ENCODE measurements at regions of chr11 and their contacts with region 1.

Region 1: DNA sequence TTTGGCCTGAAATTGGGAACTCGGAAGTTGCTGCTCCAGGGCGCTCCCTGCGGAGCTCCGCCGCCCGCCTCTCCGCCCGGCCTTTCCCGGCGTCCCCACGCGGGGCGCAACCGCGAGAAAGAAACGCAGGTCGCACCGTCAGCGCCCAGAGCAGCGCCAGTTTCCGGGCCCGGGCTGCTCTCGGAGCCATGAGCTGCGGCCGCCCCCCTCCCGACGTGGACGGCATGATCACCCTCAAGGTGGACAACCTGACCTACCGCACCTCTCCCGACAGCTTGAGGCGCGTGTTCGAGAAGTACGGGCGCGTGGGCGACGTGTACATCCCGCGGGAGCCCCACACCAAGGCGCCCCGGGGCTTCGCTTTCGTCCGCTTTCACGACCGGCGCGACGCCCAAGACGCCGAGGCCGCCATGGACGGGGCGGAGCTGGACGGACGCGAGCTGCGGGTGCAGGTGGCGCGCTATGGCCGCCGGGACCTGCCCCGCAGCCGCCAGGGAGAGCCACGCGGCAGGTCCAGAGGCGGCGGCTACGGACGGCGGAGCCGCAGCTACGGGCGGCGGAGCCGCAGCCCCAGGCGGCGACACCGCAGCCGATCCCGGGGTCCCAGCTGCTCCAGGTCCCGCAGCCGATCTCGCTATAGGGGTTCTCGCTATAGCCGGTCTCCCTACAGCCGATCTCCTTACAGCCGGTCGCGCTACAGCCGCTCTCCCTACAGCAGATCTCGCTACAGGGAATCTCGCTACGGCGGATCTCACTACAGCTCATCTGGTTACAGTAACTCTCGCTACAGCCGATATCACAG is 521 bp downstream of the SRSF8 start:
- DNase-seq: peak; percentile 62 to 79 (median 74)
- ATAC-seq: peak; percentile 81
- H3K4me3 ChIP-seq: peak overlapping the region; percentile 87
- H3K4me3 Mint-ChIP-seq: peak overlapping the region; percentile 93 to 100 (median 96)
- H3K27ac ChIP-seq: peak overlapping the region; percentile 96
- H3K27ac Mint-ChIP-seq: peak overlapping the region; percentile 93 to 100 (median 97)
- H3K4me1 ChIP-seq: peaks cover 16 to 17% of the 10 kb centered on the region in 2 donors
- H3K4me1 Mint-ChIP-seq: peaks cover 17 to 38% (median 30%) of the 10 kb centered on the region in 7 donors
- H3K27me3 ChIP-seq: no peaks in the 10 kb centered on the region
- H3K27me3 Mint-ChIP-seq: peaks cover 0 to 23% (median 0%) of the 10 kb centered on the region in 5 donors

Region 2: GRCh38 chr11:93784152-93784934 is 1282.9 kb before region 1 on chr11 and contains the start of gene MED17:
- CTCF ChIA-PET with region 1: no interaction called
- POLR2A ChIA-PET with region 1: no interaction called
- intact Hi-C with region 1: loop called in 1 of 2 experiments (anchors 5 kb)
- DNase-seq: peak; percentile 64 to 87 (median 85)
- ATAC-seq: peak; percentile 97
- H3K4me3 ChIP-seq: peak within 1 kb of the TSS; percentile 77
- H3K4me3 Mint-ChIP-seq: peak within 1 kb of the TSS; percentile 93 to 100 (median 96)
- H3K27ac ChIP-seq: peak within 1 kb of the TSS; percentile 94
- H3K27ac Mint-ChIP-seq: peak within 1 kb of the TSS; percentile 81 to 97 (median 93)
- H3K4me1 ChIP-seq: peaks cover 22 to 37% of the 10 kb centered on the region in 2 donors
- H3K4me1 Mint-ChIP-seq: peaks cover 34 to 58% (median 48%) of the 10 kb centered on the region in 7 donors
- H3K27me3 ChIP-seq: no peaks in the 10 kb centered on the region
- H3K27me3 Mint-ChIP-seq: no peaks in the 10 kb centered on the region
- total RNA-seq, gene MED17: 47.7 to 75.9 (median 65.6) TPM

Region 3: GRCh38 chr11:94623120-94623735 is 444.0 kb before region 1 on chr11:
- CTCF ChIA-PET with region 1: no interaction called
- POLR2A ChIA-PET with region 1: no interaction called
- intact Hi-C with region 1: loop called (anchors 1 to 2 kb)
- DNase-seq: peak in 8 of 9 donors; percentile 33 to 68 (median 55)
- ATAC-seq: peak; percentile 91
- H3K4me3 ChIP-seq: no peak overlapping the region
- H3K4me3 Mint-ChIP-seq: no peak overlapping the region
- H3K27ac ChIP-seq: no peak overlapping the region
- H3K27ac Mint-ChIP-seq: peak overlapping the region in 1 of 9 donors; percentile 2
- H3K4me1 ChIP-seq: no peaks in the 10 kb centered on the region
- H3K4me1 Mint-ChIP-seq: peaks cover 0 to 2% (median 0%) of the 10 kb centered on the region in 7 donors
- H3K27me3 ChIP-seq: no peaks in the 10 kb centered on the region
- H3K27me3 Mint-ChIP-seq: peaks cover 5 to 18% (median 13%) of the 10 kb centered on the region in 5 donors

Region 4: DNA sequence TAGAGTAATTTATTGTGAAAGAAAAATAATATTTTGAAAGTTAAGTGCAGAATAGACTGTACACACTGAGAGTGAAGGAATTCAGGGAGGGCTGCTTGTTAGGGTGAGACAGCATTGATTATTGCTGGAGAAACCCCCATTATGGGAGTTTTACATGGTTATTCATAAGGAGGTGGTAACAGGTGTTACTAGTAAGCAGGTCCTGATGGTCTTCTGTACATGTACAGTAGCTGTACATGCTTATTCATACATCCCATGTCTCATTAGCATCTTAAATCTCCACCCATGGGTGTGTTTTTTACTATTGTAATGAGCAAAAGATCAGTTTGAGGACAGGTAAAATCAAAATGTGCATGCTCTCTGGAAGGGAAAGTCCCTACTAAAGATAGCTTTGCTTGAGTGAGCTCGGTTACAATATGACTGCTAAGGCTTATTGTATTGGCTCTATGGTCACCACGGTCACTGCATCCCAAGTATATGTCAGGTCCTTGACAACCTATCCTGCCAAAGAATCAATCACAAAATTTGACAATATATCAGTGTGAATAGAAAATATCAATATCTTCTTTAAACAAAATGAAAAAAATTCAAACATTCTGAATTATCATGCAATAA is 11.8 kb before region 1 on chr11:
- CTCF ChIA-PET with region 1: no interaction called
- POLR2A ChIA-PET with region 1: interaction called, 13 read pairs
- intact Hi-C with region 1: no loop called
- DNase-seq: no peak
- ATAC-seq: no peak
- H3K4me3 ChIP-seq: no peak overlapping the region
- H3K4me3 Mint-ChIP-seq: no peak overlapping the region
- H3K27ac ChIP-seq: no peak overlapping the region
- H3K27ac Mint-ChIP-seq: no peak overlapping the region
- H3K4me1 ChIP-seq: no peaks in the 10 kb centered on the region
- H3K4me1 Mint-ChIP-seq: no peaks in the 10 kb centered on the region
- H3K27me3 ChIP-seq: no peaks in the 10 kb centered on the region
- H3K27me3 Mint-ChIP-seq: peaks cover 40 to 60% (median 47%) of the 10 kb centered on the region in 5 donors

Region 5: GRCh38 chr11:95150946-95151684 is 83.9 kb after region 1 on chr11:
- CTCF ChIA-PET with region 1: interaction called, 45 read pairs
- POLR2A ChIA-PET with region 1: interaction called, 107 read pairs
- intact Hi-C with region 1: loop called (anchors 1 kb)
- DNase-seq: peak; percentile 74 to 93 (median 90)
- ATAC-seq: peak; percentile 97
- H3K4me3 ChIP-seq: peak overlapping the region; percentile 91
- H3K4me3 Mint-ChIP-seq: peak overlapping the region; percentile 81 to 92 (median 88)
- H3K27ac ChIP-seq: peak overlapping the region; percentile 75
- H3K27ac Mint-ChIP-seq: peak overlapping the region; percentile 92 to 99 (median 96)
- H3K4me1 ChIP-seq: peaks cover 19 to 22% of the 10 kb centered on the region in 2 donors
- H3K4me1 Mint-ChIP-seq: peaks cover 22 to 53% (median 32%) of the 10 kb centered on the region in 7 donors
- H3K27me3 ChIP-seq: no peaks in the 10 kb centered on the region
- H3K27me3 Mint-ChIP-seq: peaks cover 0 to 5% (median 3%) of the 10 kb centered on the region in 5 donors

Region 6: DNA sequence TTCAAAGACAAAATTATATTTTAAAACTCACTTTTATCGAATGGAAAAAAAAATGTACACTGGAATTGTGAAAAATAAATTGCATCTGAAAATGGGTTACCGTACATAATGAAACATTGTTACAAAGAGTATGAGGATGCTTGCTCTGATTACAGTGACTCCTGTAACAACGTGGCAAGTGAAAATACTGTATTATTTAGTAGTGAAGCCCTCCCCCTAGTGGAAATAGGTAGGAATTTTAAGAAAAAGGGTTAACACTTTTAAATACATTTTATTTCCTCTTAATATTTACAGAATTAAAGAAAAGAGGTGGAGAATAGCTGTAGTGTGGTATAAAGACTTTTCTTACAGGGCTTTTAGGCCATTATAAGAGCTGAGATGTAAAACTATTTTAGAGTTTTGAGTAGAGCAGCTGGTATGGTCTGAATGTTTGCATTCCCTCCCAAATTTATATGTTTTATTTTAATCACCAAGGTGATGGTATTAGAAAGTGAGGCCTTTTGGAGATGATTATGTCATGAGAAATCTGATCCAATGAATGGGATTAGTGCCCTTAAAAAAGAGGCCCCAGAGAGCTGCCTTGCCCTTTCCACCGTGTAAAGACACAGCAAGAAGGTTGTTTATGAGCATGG is 697.1 kb after region 1 on chr11:
- CTCF ChIA-PET with region 1: interaction called, 7 read pairs
- POLR2A ChIA-PET with region 1: interaction called, 6 read pairs
- intact Hi-C with region 1: loop called (anchors 1 kb)
- DNase-seq: peak in 7 of 9 donors; percentile 43 to 73 (median 68)
- ATAC-seq: peak; percentile 95
- H3K4me3 ChIP-seq: no peak overlapping the region
- H3K4me3 Mint-ChIP-seq: no peak overlapping the region
- H3K27ac ChIP-seq: no peak overlapping the region
- H3K27ac Mint-ChIP-seq: no peak overlapping the region
- H3K4me1 ChIP-seq: no peaks in the 10 kb centered on the region
- H3K4me1 Mint-ChIP-seq: peaks cover 0 to 9% (median 0%) of the 10 kb centered on the region in 7 donors
- H3K27me3 ChIP-seq: no peaks in the 10 kb centered on the region
- H3K27me3 Mint-ChIP-seq: peaks cover 0 to 19% (median 0%) of the 10 kb centered on the region in 5 donors

Measured in naive thymus-derived CD4-positive, alpha-beta T cell (primary cell).